ENCODE measurements at regions of chr4 and their contacts with region 1.

Region 1: DNA sequence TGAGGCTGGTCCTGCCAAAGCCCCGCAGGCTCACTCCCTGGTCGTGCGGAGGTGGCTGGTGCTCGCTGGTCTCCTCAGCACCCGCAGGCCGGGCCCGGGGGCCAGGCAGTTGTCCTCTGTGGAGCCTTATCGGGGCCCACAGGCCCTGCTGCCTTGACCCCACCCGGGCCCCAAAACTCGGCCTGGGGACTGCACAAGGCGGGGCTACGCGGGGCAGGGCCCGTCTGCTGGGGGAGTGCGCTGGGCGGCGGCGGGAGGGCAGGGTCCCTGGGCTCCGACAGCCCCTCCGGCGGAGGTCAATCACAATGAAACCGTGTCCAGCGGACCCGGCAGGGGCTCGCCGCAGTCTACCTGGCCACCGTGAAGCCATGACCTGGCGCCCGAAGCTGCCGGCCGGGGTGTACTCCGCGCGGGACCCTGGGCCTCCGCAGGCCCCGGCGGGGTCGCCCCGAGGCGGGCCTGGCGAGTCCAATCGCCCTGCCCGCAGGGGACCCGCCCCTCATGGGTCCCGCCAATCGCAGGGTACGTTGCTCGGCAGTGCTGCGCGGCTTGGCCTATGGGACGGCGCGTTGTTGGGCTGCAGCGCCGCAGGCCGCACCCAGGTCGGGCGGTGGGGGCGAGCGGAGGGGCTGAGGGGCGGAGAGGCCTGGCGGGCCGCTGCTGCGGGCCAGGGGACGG is at the start of gene ADD1:
- DNase-seq: peak; percentile 91 to 97 (median 91)
- H3K4me3 ChIP-seq: peak within 1 kb of the TSS; percentile 1 to 78 (median 54)
- H3K27ac ChIP-seq: peak within 1 kb of the TSS; percentile 3 to 95 (median 84)
- H3K4me1 ChIP-seq: peaks cover 14 to 42% of the 10 kb centered on the region in 2 donors
- H3K27me3 ChIP-seq: no peaks in the 10 kb centered on the region
- CTCF ChIP-seq: no peak
- POLR2A ChIP-seq: peak; percentile 74 to 81
- total RNA-seq, gene ADD1: 143 to 290 (median 225) TPM

Region 2: DNA sequence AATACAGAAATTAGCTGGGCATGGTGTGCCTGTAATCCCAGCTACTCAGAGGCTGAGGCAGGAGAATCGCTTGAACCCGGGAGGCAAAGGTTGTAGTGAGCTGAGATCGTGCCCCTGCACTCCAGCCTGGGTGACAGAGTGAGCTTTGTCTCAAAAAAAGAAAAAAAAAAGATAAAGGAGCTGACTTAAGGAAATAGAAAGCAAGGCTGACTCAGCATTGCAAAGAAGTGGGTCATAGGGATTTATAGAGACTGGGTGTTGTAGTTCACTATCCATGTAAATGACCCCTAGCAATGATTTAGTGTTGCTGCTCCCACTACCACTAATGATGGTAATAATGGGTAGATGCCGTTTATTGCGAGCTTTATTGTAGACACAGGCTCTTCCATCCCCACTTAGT is 47.9 kb after region 1 on chr4:
- intact Hi-C with region 1: loop called in 1 of 2 experiments (anchors 10 kb)
- DNase-seq: no peak
- H3K4me3 ChIP-seq: no peak overlapping the region
- H3K27ac ChIP-seq: no peak overlapping the region
- H3K4me1 ChIP-seq: peaks cover 7 to 21% of the 10 kb centered on the region in 2 donors
- H3K27me3 ChIP-seq: no peaks in the 10 kb centered on the region
- CTCF ChIP-seq: no peak
- POLR2A ChIP-seq: no peak

Region 3: GRCh38 chr4:2934813-2935761 is 91.7 kb after region 1 on chr4:
- intact Hi-C with region 1: loop called (anchors 10 kb)
- DNase-seq: peak; percentile 91 to 97 (median 97)
- H3K4me3 ChIP-seq: peak overlapping the region; percentile 3 to 98 (median 82)
- H3K27ac ChIP-seq: peak overlapping the region; percentile 57 to 95 (median 84)
- H3K4me1 ChIP-seq: peaks cover 16 to 38% of the 10 kb centered on the region in 2 donors
- H3K27me3 ChIP-seq: no peaks in the 10 kb centered on the region
- CTCF ChIP-seq: peak in 2 of 6 experiments; percentile 46 to 48
- POLR2A ChIP-seq: peak; percentile 80 to 91